ENCODE measurements at regions of chr5 and their contacts with region 1.

Region 1: DNA sequence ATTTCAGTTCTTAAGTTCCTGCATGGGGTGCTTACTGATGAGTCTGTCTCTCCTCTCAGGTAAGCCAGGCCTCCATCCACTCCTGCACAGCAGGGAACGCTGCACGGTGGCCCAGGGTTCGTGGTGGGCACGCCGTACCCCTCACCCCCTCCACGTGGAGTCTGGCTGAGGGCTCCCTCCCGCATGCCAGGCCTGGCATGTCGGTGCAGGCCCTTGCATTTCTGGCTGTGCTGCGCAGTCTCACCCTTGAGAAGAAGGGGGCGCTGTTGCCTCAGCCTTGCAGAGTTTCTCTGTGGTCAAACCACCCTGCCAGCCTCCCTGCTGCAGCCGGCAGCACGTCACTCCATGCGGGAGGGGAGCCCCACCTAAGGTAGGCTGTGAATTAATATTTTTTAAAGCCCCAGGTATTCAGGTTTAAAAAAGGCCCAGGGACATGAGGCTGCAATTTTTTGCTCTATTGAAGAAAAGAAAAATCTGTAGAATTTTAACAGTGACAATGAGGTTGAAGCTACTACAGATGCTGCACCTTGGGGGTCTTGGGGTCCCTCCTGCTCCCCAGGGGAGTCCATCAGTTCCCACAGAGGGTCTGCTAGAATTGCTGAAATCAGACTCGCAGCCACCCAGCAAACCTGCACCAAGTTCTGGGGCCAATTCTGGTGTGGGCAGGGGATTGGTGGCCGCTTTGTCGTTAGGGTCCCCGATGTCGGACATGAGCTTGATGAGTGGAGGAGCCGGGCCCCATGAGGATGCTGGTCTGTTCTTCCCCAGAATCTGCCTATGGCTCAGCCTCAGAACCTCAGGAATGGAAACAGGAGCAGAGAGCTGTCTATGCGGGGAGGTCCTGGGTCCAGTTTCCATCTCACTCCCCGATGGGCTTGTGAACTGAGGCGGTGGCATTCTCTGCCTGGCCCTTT is 52.6 kb downstream of the TENT4A start:
- DNase-seq: peak; percentile 86
- H3K4me3 ChIP-seq: peak overlapping the region in 1 of 8 donors; percentile 32
- H3K27ac ChIP-seq: peak overlapping the region in 2 of 8 donors; percentile 42 to 69
- H3K4me1 ChIP-seq: peaks cover 0 to 26% (median 12%) of the 10 kb centered on the region in 6 donors
- H3K27me3 ChIP-seq: no peaks in the 10 kb centered on the region
- CTCF ChIP-seq: peak; percentile 25 to 83 (median 71)
- POLR2A ChIP-seq: no peak

Region 2: DNA sequence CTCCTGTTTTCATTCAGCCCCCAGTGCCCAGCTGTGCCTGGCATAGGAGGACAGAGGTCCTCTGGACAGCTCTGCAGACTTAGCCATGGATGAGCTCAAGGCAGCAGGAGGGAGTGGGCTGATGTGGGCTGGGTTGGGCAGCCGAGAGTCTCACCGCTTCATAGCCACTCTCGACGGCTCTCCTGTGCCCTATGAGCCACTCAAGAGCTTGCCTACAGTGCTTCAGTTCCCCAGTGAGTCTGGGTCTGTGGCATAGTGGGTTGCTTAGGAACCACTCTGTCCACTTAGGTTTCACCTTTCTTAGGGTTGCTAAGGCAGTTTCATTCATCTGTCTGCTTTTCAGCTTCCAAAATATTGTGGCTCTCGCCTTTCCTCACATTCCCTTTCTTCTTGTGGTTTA is 1046.6 kb before region 1 on chr5:
- intact Hi-C with region 1: no loop called
- DNase-seq: no peak
- H3K4me3 ChIP-seq: no peak overlapping the region
- H3K27ac ChIP-seq: no peak overlapping the region
- H3K4me1 ChIP-seq: no peaks in the 10 kb centered on the region
- H3K27me3 ChIP-seq: no peaks in the 10 kb centered on the region
- CTCF ChIP-seq: no peak
- POLR2A ChIP-seq: no peak

Region 3: GRCh38 chr5:6158974-6159861 is 606.7 kb before region 1 on chr5:
- intact Hi-C with region 1: no loop called
- DNase-seq: no peak
- H3K4me3 ChIP-seq: no peak overlapping the region
- H3K27ac ChIP-seq: no peak overlapping the region
- H3K4me1 ChIP-seq: no peaks in the 10 kb centered on the region
- H3K27me3 ChIP-seq: peaks cover 0 to 11% (median 0%) of the 10 kb centered on the region in 7 donors
- CTCF ChIP-seq: no peak
- POLR2A ChIP-seq: no peak

Region 4: DNA sequence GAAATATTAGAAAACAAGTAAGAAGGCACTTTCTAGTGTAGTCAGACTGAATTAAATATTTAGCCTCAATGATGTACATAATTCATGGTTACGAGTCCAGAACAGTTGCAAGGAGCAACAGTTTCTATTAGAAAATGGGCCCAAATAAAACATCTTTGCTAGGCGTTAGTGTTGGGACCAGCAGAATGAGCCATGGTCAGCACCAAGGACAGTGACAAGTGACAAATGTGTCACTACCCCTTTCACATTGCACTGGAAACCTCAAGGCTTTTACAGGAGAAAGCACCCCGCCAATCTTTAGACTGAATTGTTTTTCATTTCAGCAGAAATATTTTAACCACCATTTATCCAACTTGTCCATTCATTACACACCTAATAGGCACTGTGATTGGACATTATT is 328.8 kb after region 1 on chr5:
- intact Hi-C with region 1: no loop called
- DNase-seq: no peak
- H3K4me3 ChIP-seq: no peak overlapping the region
- H3K27ac ChIP-seq: no peak overlapping the region
- H3K4me1 ChIP-seq: no peaks in the 10 kb centered on the region
- H3K27me3 ChIP-seq: no peaks in the 10 kb centered on the region
- CTCF ChIP-seq: no peak
- POLR2A ChIP-seq: no peak

Region 5: GRCh38 chr5:7745882-7746610 is 980.2 kb after region 1 on chr5:
- intact Hi-C with region 1: loop called (anchors 5 kb)
- DNase-seq: no peak
- H3K4me3 ChIP-seq: no peak overlapping the region
- H3K27ac ChIP-seq: no peak overlapping the region
- H3K4me1 ChIP-seq: no peaks in the 10 kb centered on the region
- H3K27me3 ChIP-seq: peaks cover 0 to 8% (median 0%) of the 10 kb centered on the region in 7 donors
- CTCF ChIP-seq: peak in 10 of 11 experiments; percentile 18 to 79 (median 64)
- POLR2A ChIP-seq: no peak

Measured in spleen (tissue), 13 donors.